ENCODE measurements at regions of chr17 and their contacts with region 1.

Region 1: GRCh38 chr17:7687908-7688807 is at the start of gene WRAP53:
- DNase-seq: peak; percentile 97
- H3K4me3 Mint-ChIP-seq: peak within 1 kb of the TSS; percentile 94
- H3K27ac Mint-ChIP-seq: peak within 1 kb of the TSS; percentile 96
- H3K4me1 Mint-ChIP-seq: peaks cover 39% of the 10 kb centered on the region
- H3K27me3 Mint-ChIP-seq: no peaks in the 10 kb centered on the region
- total RNA-seq, gene WRAP53: 18.6 to 18.8 TPM

Region 2: DNA sequence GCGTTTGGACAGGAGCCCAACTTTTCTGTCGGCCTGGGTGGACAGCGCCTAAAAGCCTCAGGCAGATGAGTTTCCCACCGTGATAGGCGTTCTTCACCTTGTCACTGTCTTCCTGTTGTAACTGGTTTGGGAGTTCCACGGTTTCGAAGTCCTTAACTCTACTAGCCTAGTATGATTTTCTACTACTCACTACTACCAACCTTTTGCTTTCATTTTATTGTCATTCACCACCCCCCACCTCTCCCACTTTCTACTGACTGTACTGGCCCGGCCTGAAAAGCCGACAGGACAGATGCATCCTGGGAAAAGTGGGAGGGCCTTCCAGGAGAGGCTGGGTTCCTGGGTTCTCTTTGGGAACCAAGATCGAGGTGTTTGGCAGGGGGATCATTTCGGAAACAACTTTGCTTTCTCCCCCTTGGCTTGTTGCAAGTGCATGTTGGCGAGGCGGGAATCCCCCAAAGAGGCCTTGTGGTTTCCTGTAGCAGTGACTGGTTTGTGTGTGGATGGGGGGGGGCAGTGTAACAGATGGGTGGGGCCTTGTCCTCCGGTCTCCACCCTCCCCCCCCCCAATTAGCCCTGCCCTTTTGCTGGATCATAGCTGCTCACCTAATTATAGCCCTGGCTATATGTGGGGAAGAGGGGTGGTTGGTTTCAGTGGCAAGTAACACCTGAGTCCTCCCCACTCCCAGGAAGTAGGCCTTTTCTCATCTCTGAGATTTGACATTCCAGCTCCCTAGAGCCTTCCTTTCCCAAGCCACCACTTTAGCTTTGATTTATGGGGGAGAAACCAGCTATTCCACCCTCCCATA is 379.3 kb before region 1 on chr17:
- CTCF ChIA-PET with region 1: no interaction called
- POLR2A ChIA-PET with region 1: interaction called, 10 read pairs
- DNase-seq: peak; percentile 84
- H3K4me3 Mint-ChIP-seq: peak overlapping the region; percentile 82
- H3K27ac Mint-ChIP-seq: peak overlapping the region; percentile 94
- H3K4me1 Mint-ChIP-seq: peaks cover 57% of the 10 kb centered on the region
- H3K27me3 Mint-ChIP-seq: no peaks in the 10 kb centered on the region

Region 3: DNA sequence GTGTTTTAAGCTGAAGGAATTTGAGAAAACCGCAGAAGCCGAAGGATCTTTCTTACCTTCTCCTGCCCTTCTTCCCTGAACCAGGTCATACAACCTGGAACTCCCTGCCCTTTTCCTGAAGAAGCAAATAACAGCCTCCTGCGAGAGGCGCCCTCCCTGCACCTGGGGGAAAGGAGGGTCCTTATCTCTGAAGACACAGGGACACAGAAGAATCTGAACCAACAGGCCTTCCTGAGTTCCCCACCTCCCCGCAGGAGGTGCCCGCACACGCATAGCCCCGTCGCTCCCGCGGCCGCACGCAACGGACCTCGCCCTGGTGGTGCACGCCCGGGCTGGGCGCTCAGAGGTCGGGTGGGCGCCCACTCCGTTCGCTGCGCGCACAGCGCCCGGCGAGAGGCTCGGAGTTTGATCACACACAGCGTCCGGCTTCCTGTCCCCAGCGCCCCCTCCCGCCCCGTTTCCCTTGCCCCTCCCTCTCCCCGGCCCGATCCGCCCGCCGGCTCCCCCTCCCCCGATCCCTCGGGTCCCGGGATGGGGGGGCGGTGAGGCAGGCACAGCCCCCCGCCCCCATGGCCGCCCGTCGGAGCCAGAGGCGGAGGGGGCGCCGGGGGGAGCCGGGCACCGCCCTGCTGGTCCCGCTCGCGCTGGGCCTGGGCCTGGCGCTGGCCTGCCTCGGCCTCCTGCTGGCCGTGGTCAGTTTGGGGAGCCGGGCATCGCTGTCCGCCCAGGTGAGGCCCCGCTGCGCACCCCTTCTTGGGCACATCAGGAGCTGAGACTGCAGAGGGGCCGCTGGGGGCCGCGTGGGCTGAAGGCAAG is 139.4 kb before region 1 on chr17 and contains the start of gene TNFSF12:
- CTCF ChIA-PET with region 1: interaction called, 3 read pairs
- POLR2A ChIA-PET with region 1: interaction called, 19 read pairs
- DNase-seq: peak; percentile 73
- H3K4me3 Mint-ChIP-seq: peak within 1 kb of the TSS; percentile 99
- H3K27ac Mint-ChIP-seq: peak within 1 kb of the TSS; percentile 93
- H3K4me1 Mint-ChIP-seq: peaks cover 58% of the 10 kb centered on the region
- H3K27me3 Mint-ChIP-seq: no peaks in the 10 kb centered on the region
- total RNA-seq, gene TNFSF12: 79.8 to 86.7 TPM

Region 4: GRCh38 chr17:7614422-7615264 is 73.5 kb before region 1 on chr17 and contains the start of gene FXR2:
- CTCF ChIA-PET with region 1: interaction called, 56 read pairs
- POLR2A ChIA-PET with region 1: interaction called, 62 read pairs
- DNase-seq: peak; percentile 99
- H3K4me3 Mint-ChIP-seq: peak within 1 kb of the TSS; percentile 89
- H3K27ac Mint-ChIP-seq: peak within 1 kb of the TSS; percentile 82
- H3K4me1 Mint-ChIP-seq: peaks cover 27% of the 10 kb centered on the region
- H3K27me3 Mint-ChIP-seq: no peaks in the 10 kb centered on the region
- total RNA-seq, gene FXR2: 30.4 to 31.2 TPM

Region 5: GRCh38 chr17:7673239-7673638 is 14.9 kb before region 1 on chr17:
- CTCF ChIA-PET with region 1: interaction called, 19 read pairs
- POLR2A ChIA-PET with region 1: interaction called, 72 read pairs
- DNase-seq: peak; percentile 51
- H3K4me3 Mint-ChIP-seq: no peak overlapping the region
- H3K27ac Mint-ChIP-seq: no peak overlapping the region
- H3K4me1 Mint-ChIP-seq: peaks cover 3% of the 10 kb centered on the region
- H3K27me3 Mint-ChIP-seq: no peaks in the 10 kb centered on the region

Region 6: GRCh38 chr17:7931709-7932482 is 243.7 kb after region 1 on chr17 and contains the starts of genes CNTROB and TRAPPC1:
- CTCF ChIA-PET with region 1: interaction called, 3 read pairs
- POLR2A ChIA-PET with region 1: interaction called, 19 read pairs
- DNase-seq: peak; percentile 100
- H3K4me3 Mint-ChIP-seq: peak within 1 kb of the TSS; percentile 93
- H3K27ac Mint-ChIP-seq: peak within 1 kb of the TSS; percentile 87
- H3K4me1 Mint-ChIP-seq: peaks cover 56% of the 10 kb centered on the region
- H3K27me3 Mint-ChIP-seq: no peaks in the 10 kb centered on the region
- total RNA-seq, gene CNTROB: 58.8 to 64.6 TPM
- total RNA-seq, gene TRAPPC1: 238 to 244 TPM

Measured in activated CD4-positive, alpha-beta memory T cell treated with anti-CD3 and anti-CD28 coated beads, Interleukin-2, amount 10 ng/mL, durations not matched to agents 7 days and 5 days (primary cell).